Activated CD4-positive, alpha-beta T cell treated with anti-CD3 and anti-CD28 coated beads for 36 hours (primary cell): ENCODE measurements at regions of chr17 and their contacts with region 1.

Region 1: DNA sequence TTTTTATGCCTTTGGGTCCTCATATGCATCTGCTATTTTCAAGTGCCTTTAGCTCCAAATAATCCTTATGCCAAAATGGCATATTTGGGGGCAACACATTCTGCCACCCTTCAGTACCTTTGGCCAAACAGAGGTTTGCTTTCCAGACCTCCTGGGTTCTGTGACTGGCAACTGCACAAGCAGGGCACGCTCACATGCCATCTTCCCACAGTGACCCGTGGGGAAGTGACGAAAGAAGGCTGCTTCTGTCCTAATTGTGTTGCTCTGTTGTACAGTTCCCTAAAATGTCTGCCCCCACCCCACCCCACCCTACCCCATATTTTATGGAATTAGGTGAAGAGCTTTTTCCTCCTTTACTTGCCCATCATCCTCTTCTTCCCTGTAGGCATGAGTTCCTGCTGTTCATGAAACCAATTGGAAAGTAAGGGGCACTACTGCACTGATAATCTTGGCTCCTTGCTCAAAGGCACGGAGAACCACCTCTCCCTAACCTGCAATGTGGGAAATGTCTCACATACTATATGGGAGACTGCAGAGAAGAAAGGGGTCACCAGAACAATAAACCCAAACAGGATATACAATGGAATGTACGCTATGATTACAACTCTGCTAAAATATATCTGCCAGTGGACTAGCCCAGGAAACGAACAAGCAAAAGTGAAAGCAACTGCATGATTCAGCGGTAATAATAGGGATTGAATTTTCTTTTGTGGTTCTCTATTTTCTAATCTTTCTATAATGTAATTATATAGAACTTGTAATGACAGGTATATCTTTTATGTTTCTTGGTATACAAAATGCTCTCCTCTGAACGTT is 3.3 kb upstream of the SLFN12L start:
- DNase-seq: peak; percentile 62
- ATAC-seq: no peak
- H3K4me3 Mint-ChIP-seq: peak overlapping the region; percentile 78
- H3K27ac Mint-ChIP-seq: peak overlapping the region; percentile 100
- H3K4me1 Mint-ChIP-seq: peaks cover 48% of the 10 kb centered on the region
- H3K27me3 Mint-ChIP-seq: no peaks in the 10 kb centered on the region

Region 2: DNA sequence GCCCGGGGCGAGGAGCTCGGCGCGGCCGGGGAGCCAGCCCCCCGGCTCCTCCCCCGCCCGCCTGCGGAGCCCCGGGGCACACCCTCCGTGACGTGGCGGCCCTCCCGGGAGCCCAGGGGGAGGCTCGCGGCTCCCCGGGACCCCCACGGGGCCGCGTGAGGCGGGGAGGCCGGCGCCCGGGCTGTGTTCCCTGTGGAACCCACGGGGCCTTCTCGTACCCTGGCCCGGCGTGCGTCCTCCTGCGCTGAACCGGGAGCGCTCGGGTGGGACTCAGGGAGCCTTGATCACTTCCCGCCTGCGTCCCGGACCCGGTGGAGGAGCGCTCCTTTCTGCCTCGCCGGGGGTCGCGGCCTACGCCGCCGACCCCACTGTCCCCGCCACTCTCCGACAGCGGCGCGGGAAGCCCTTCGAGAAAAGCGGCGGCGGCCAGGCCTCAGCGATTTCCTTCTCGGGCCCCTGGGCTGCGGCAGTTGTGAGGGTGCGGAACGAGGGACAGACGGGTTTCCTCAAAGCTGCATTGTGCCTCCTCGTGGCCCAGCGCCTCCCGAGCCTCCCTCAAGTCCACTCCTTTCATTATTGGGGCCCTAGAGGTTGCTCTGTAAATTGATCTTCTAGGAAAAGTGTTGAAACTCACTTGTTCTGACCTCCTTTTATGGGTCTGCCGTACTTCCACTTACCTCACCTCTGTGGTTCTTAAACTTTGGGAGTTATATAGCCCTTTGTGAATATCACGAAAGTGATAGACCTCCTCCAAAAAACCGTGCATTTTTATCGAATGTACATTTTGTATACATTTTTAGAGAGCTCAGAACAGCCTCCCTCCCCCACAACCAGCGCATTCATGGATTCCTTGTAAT is 559.9 kb before region 1 on chr17:
- CTCF ChIA-PET with region 1: no interaction called
- POLR2A ChIA-PET with region 1: no interaction called
- intact Hi-C with region 1: loop called in 1 of 2 experiments (anchors 2 kb)
- DNase-seq: peak; percentile 82
- ATAC-seq: peak; percentile 82
- H3K4me3 Mint-ChIP-seq: peak overlapping the region; percentile 86
- H3K27ac Mint-ChIP-seq: peak overlapping the region; percentile 93
- H3K4me1 Mint-ChIP-seq: peaks cover 50% of the 10 kb centered on the region
- H3K27me3 Mint-ChIP-seq: no peaks in the 10 kb centered on the region

Region 3: GRCh38 chr17:35214631-35215273 is 326.0 kb before region 1 on chr17:
- CTCF ChIA-PET with region 1: interaction called, 7 read pairs
- POLR2A ChIA-PET with region 1: no interaction called
- intact Hi-C with region 1: loop called in 1 of 2 experiments (anchors 1 kb)
- DNase-seq: peak; percentile 54
- ATAC-seq: peak; percentile 67
- H3K4me3 Mint-ChIP-seq: peak overlapping the region; percentile 49
- H3K27ac Mint-ChIP-seq: peak overlapping the region; percentile 80
- H3K4me1 Mint-ChIP-seq: peaks cover 85% of the 10 kb centered on the region
- H3K27me3 Mint-ChIP-seq: no peaks in the 10 kb centered on the region

Region 4: GRCh38 chr17:35432176-35433074 is 108.4 kb before region 1 on chr17 and contains the start of gene SLFN12:
- CTCF ChIA-PET with region 1: interaction called, 3 read pairs
- POLR2A ChIA-PET with region 1: no interaction called
- intact Hi-C with region 1: loop called in 1 of 2 experiments (anchors 2 kb)
- DNase-seq: peak; percentile 63
- ATAC-seq: peak; percentile 83
- H3K4me3 Mint-ChIP-seq: peak within 1 kb of the TSS; percentile 90
- H3K27ac Mint-ChIP-seq: peak within 1 kb of the TSS; percentile 98
- H3K4me1 Mint-ChIP-seq: peaks cover 40% of the 10 kb centered on the region
- H3K27me3 Mint-ChIP-seq: no peaks in the 10 kb centered on the region
- total RNA-seq, gene SLFN12: 5.4 TPM

Region 5: GRCh38 chr17:35568541-35568940 is 27.7 kb after region 1 on chr17:
- CTCF ChIA-PET with region 1: interaction called, 5 read pairs
- POLR2A ChIA-PET with region 1: no interaction called
- intact Hi-C with region 1: loop called in 1 of 2 experiments (anchors 1 kb)
- DNase-seq: peak; percentile 75
- ATAC-seq: peak; percentile 58
- H3K4me3 Mint-ChIP-seq: peak overlapping the region; percentile 95
- H3K27ac Mint-ChIP-seq: peak overlapping the region; percentile 86
- H3K4me1 Mint-ChIP-seq: peaks cover 25% of the 10 kb centered on the region
- H3K27me3 Mint-ChIP-seq: no peaks in the 10 kb centered on the region

Region 6: GRCh38 chr17:35747540-35748017 is 206.8 kb after region 1 on chr17:
- CTCF ChIA-PET with region 1: no interaction called
- POLR2A ChIA-PET with region 1: no interaction called
- intact Hi-C with region 1: loop called (anchors 1 to 5 kb)
- DNase-seq: peak; percentile 90
- ATAC-seq: peak; percentile 91
- H3K4me3 Mint-ChIP-seq: no peak overlapping the region
- H3K27ac Mint-ChIP-seq: no peak overlapping the region
- H3K4me1 Mint-ChIP-seq: peaks cover 23% of the 10 kb centered on the region
- H3K27me3 Mint-ChIP-seq: peaks cover 33% of the 10 kb centered on the region

Region 7: DNA sequence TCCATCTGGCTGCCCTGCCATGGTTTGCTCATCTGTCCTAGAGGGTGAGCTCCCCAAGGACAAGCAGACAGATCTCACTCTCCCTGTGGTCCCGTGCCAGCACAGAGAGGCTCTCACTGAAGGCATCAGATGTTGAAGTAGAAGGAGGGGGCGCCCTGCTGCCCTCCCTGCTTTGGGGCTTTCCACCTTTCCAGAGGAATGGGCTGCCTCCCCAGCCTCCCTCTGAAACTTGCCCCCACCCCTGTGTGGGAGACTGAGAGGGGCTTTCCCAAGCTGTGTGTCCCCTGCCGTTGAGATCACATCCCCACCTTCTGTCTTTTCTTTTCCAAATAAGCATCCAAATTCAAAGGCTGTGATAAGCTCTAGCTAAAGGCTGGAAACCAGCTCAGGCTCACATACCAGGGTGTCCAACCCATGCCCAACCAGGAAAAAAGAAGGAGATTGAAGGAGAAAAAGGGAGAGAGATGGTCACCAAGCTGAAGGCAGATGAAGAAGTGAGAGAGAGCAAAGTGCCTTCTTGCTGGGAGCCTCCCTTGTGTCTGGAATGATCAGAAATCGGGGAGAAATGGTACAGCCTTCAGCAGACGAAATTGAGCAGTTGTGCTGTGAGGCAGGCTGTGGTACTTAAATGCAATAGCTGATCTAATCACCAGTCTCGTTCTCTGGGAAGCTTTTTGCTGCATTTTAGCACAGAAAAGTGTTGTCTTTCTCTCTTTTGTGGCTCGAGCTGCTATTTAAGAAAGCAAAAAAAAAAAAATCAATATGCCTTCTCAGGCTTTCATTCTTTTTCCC is 1250.5 kb after region 1 on chr17:
- CTCF ChIA-PET with region 1: no interaction called
- POLR2A ChIA-PET with region 1: no interaction called
- intact Hi-C with region 1: no loop called
- DNase-seq: no peak
- ATAC-seq: no peak
- H3K4me3 Mint-ChIP-seq: no peak overlapping the region
- H3K27ac Mint-ChIP-seq: no peak overlapping the region
- H3K4me1 Mint-ChIP-seq: no peaks in the 10 kb centered on the region
- H3K27me3 Mint-ChIP-seq: peaks cover 17% of the 10 kb centered on the region